ENCODE measurements at regions of chr2 and their contacts with region 1.

Region 1: DNA sequence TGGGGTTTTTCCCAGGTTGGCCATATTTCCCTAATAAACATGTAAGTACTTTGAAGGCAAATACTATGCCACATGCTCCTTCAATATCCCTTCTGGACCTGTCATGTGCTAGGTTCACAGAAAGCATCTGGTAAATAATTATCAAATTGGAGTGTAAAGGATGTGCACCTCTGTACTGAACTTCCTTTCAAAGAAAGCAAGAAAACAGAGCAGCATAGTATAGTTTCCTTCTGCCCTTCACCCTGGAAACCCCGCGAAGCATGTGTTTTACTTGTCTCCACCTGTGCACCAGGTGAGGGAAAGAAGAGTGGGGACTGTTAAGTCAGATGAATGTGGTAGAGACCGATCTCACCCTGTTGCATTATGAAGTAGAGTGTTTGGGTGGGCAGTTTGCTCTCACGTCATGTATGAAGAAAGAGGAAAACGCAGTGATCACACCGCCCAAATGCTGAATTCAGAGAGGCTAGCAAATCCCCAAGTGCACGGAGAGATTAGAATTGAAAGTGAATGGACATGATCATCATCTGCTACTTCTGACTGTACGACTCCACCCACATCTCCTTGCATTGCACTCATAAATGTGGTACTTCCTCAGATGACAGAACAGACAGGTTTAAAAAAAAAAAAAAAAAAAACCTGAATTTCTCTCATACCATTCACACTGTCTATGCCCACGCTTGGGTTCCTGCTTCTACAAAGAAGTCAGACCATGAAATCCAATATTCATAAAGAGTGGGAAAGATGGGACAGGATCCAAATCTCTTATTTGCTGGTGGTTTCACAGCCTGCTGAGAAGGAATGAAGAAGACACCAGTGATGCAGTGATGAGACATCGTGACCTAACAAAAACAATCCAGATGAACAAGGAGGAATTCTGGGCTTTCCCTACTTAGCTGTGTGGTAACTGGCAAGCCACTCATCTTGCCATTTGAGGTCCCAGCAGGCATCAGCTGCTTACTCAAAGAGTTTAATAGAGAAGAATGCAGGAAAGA is 448.6 kb downstream of the BCL11A start:
- DNase-seq: peak in 4 of 9 donors; percentile 1 to 19 (median 6)
- ATAC-seq: peak; percentile 72
- H3K4me3 ChIP-seq: no peak overlapping the region
- H3K4me3 Mint-ChIP-seq: peak overlapping the region; percentile 54 to 85 (median 82)
- H3K27ac ChIP-seq: no peak overlapping the region
- H3K27ac Mint-ChIP-seq: peak overlapping the region in 6 of 9 donors; percentile 3 to 79 (median 36)
- H3K4me1 ChIP-seq: peaks cover 0 to 3% of the 10 kb centered on the region in 2 donors
- H3K4me1 Mint-ChIP-seq: peaks cover 6 to 22% (median 15%) of the 10 kb centered on the region in 7 donors
- H3K27me3 ChIP-seq: no peaks in the 10 kb centered on the region
- H3K27me3 Mint-ChIP-seq: peaks cover 2 to 12% (median 7%) of the 10 kb centered on the region in 5 donors

Region 2: GRCh38 chr2:59754011-59754735 is 350.6 kb before region 1 on chr2:
- CTCF ChIA-PET with region 1: no interaction called
- POLR2A ChIA-PET with region 1: no interaction called
- intact Hi-C with region 1: loop called in 1 of 2 experiments (anchors 10 kb)
- DNase-seq: no peak
- ATAC-seq: no peak
- H3K4me3 ChIP-seq: no peak overlapping the region
- H3K4me3 Mint-ChIP-seq: no peak overlapping the region
- H3K27ac ChIP-seq: no peak overlapping the region
- H3K27ac Mint-ChIP-seq: no peak overlapping the region
- H3K4me1 ChIP-seq: no peaks in the 10 kb centered on the region
- H3K4me1 Mint-ChIP-seq: no peaks in the 10 kb centered on the region
- H3K27me3 ChIP-seq: no peaks in the 10 kb centered on the region
- H3K27me3 Mint-ChIP-seq: peaks cover 0 to 3% (median 0%) of the 10 kb centered on the region in 5 donors

Region 3: GRCh38 chr2:59874971-59875755 is 229.6 kb before region 1 on chr2:
- CTCF ChIA-PET with region 1: no interaction called
- POLR2A ChIA-PET with region 1: no interaction called
- intact Hi-C with region 1: no loop called
- DNase-seq: no peak
- ATAC-seq: no peak
- H3K4me3 ChIP-seq: no peak overlapping the region
- H3K4me3 Mint-ChIP-seq: no peak overlapping the region
- H3K27ac ChIP-seq: no peak overlapping the region
- H3K27ac Mint-ChIP-seq: peak overlapping the region in 1 of 9 donors; percentile 62
- H3K4me1 ChIP-seq: no peaks in the 10 kb centered on the region
- H3K4me1 Mint-ChIP-seq: peaks cover 0 to 7% (median 5%) of the 10 kb centered on the region in 7 donors
- H3K27me3 ChIP-seq: no peaks in the 10 kb centered on the region
- H3K27me3 Mint-ChIP-seq: peaks cover 0 to 1% (median 0%) of the 10 kb centered on the region in 5 donors